HCT116 (cell line): ENCODE measurements at regions of chr5 and their contacts with region 1.

Region 1: DNA sequence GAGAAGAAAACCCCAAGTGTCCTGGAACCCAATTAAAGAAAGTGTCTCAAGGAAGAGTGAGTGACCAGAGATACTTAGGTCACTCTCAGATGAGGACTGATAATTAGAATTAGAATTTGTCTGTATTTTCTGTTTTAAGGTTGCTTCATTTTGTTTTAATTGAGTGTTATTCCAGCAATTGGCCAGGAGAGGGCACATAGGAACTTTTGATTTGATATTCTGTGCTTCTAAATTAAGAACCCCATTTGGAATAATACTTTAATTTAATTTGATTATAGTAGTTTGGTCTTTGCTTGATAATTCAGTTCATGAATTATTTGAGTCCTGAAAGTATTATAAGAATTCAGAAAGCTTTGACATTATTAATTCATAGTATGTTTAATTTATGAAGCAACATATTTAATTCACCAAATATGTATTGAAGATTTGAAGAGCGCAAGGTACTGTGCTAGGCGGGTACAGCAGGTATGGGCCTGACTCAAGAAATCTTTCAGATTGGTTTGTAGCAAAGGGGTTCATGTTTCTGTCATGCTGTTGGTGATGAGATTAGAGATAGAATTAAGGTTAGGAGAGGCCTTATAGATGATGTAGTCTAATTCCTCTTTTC is 4.9 kb downstream of the MRPL22 start:
- DNase-seq: no peak
- ATAC-seq: no peak
- H3K4me3 ChIP-seq: no peak overlapping the region
- H3K27ac ChIP-seq: no peak overlapping the region
- H3K4me1 ChIP-seq: peaks cover under 1 to 4% of the 10 kb centered on the region in 2 experiments; a peak in 3 of 4 replicates
- H3K27me3 ChIP-seq: no peaks in the 10 kb centered on the region
- CTCF ChIP-seq: peak; percentile 43 to 62 (median 47); a peak in 4 of 6 replicates
- POLR2A ChIP-seq: no peak
- RAD21 ChIP-seq: 0 out of 2 replicates have a peak, but pooled peaks have one; percentile 39

Region 2: GRCh38 chr5:155004138-155004744 is 58.4 kb after region 1 on chr5:
- CTCF ChIA-PET with region 1: interaction called, 8 read pairs
- POLR2A ChIA-PET with region 1: no interaction called
- RAD21 ChIA-PET with region 1: no interaction called
- intact Hi-C with region 1: loop called (anchors 2 kb)
- DNase-seq: peak; percentile 31
- ATAC-seq: peak; percentile 89
- H3K4me3 ChIP-seq: no peak overlapping the region
- H3K27ac ChIP-seq: no peak overlapping the region
- H3K4me1 ChIP-seq: peaks cover 4 to 18% of the 10 kb centered on the region in 2 experiments; a peak in 2 of 4 replicates
- H3K27me3 ChIP-seq: no peaks in the 10 kb centered on the region
- CTCF ChIP-seq: peak; percentile 69 to 81 (median 75)
- POLR2A ChIP-seq: no peak
- RAD21 ChIP-seq: peak; percentile 90

Region 3: GRCh38 chr5:155027993-155028629 is 82.3 kb after region 1 on chr5:
- CTCF ChIA-PET with region 1: interaction called, 8 read pairs
- POLR2A ChIA-PET with region 1: no interaction called
- RAD21 ChIA-PET with region 1: no interaction called
- intact Hi-C with region 1: loop called (anchors 1 kb)
- DNase-seq: peak; percentile 27
- ATAC-seq: peak; percentile 96
- H3K4me3 ChIP-seq: no peak overlapping the region
- H3K27ac ChIP-seq: no peak overlapping the region
- H3K4me1 ChIP-seq: no peaks in the 10 kb centered on the region
- H3K27me3 ChIP-seq: no peaks in the 10 kb centered on the region; the same call in 1 of the 2 replicates
- CTCF ChIP-seq: peak; percentile 52 to 56 (median 54); a peak in 5 of 6 replicates
- POLR2A ChIP-seq: no peak
- RAD21 ChIP-seq: peak; percentile 78